ENCODE measurements at regions of chr6 and their contacts with region 1.

Region 1: GRCh38 chr6:100116411-100117194 is 122.6 kb upstream of the MCHR2 start:
- DNase-seq: peak; percentile 48
- H3K27ac ChIP-seq: no peak overlapping the region
- CTCF ChIP-seq: peak; percentile 76

Region 2: GRCh38 chr6:100479179-100480035 is 362.8 kb after region 1 on chr6:
- CTCF ChIA-PET with region 1: interaction called, 10 read pairs
- POLR2A ChIA-PET with region 1: no interaction called
- DNase-seq: no peak
- H3K27ac ChIP-seq: no peak overlapping the region
- CTCF ChIP-seq: peak; percentile 73

Region 3: GRCh38 chr6:100657678-100658330 is 541.2 kb after region 1 on chr6:
- CTCF ChIA-PET with region 1: interaction called, 19 read pairs
- POLR2A ChIA-PET with region 1: no interaction called
- DNase-seq: no peak
- H3K27ac ChIP-seq: no peak overlapping the region
- CTCF ChIP-seq: peak; percentile 74